GM10248 (cell line): ENCODE measurements at regions of chr1 and their contacts with region 1.

Region 1: DNA sequence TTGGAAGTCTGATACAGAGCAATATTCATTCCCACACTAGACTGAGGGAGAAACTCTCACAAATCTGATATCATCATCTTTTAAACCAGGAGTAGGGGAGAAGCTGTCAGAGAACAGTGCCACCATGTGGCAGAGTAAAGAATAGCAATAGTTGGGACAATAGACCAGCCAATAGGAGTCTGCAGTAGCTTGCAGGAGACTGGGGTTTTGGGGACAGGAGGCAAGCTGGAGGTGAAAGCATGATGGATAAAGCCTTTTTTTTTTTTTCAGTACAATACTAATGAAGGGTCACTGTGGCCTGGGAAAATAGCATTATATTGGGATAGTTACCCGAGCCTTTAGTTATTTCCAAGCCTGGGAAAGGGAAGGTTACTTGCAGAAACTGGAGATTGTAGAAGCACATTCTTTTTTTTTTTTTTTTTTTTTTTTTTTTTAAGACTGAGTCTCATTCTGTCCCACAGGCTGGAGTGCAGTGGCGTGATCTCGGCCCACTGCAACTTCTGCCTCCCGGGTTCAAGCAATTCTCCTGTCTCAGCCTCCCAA is 120.7 kb downstream of the S1PR1 start:
- DNase-seq: peak; percentile 82
- CTCF ChIP-seq: peak; percentile 79

Region 2: GRCh38 chr1:101298663-101299062 is 58.9 kb before region 1 on chr1:
- CTCF ChIA-PET with region 1: interaction called, 12 read pairs
- POLR2A ChIA-PET with region 1: no interaction called
- DNase-seq: no peak
- CTCF ChIP-seq: no peak

Region 3: DNA sequence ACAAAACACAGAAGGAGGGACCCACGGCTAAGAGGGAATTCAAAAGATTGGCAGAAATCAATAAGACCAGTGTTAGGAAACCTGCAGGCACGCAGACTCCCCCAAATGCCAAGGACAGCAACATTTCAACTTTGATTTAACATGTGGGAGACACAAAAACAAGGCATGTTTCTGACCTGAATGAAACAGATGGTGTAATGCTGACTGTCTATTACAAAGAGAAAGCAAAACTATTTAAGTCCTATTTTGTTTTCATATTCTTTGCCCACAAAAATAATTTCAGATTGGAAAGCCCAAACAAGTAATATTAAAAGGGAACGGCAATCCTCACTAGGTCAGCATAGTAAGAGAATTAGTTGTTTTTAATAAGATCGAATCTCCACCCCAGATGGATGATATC is 12.8 kb before region 1 on chr1:
- CTCF ChIA-PET with region 1: interaction called, 27 read pairs
- POLR2A ChIA-PET with region 1: no interaction called
- DNase-seq: no peak
- CTCF ChIP-seq: no peak

Region 4: GRCh38 chr1:101379950-101380349 is 22.4 kb after region 1 on chr1:
- CTCF ChIA-PET with region 1: interaction called, 43 read pairs
- POLR2A ChIA-PET with region 1: no interaction called
- DNase-seq: peak; percentile 35
- CTCF ChIP-seq: no peak

Region 5: GRCh38 chr1:101438359-101438758 is 80.8 kb after region 1 on chr1:
- CTCF ChIA-PET with region 1: interaction called, 26 read pairs
- POLR2A ChIA-PET with region 1: no interaction called
- DNase-seq: peak; percentile 38
- CTCF ChIP-seq: peak; percentile 58